Astrocyte of the cerebellum (primary cell): ENCODE measurements at regions of chr14 and their contacts with region 1.

Region 1: GRCh38 chr14:89040460-89041259 is 216.2 kb downstream of the TTC8 start:
- DNase-seq: peak; percentile 83
- H3K4me3 ChIP-seq: peak overlapping the region; percentile 30
- CTCF ChIP-seq: peak; percentile 98

Region 2: DNA sequence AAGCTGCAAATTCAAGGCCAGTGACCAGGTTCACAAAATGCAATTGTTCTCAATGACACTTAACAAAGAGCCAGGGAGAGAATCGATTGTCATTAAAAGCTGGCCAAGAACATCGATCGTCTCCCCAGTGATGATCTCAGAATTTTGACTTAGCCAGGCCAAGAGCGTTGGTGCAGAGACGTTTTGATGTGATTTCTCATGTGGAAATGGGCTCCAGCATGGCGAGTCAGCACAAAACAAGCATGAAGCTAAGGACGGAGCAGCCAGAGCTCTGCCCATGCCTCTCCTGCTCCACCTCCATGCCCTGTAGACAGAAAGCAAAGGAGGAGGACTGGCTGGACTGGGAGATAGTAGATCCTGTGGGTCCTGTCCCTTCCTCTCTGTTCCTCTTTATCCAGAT is 105.6 kb after region 1 on chr14:
- in situ Hi-C with region 1: loop called (anchors 5 kb)
- DNase-seq: no peak
- H3K4me3 ChIP-seq: no peak overlapping the region
- CTCF ChIP-seq: no peak

Region 3: GRCh38 chr14:89175881-89176799 is 135.5 kb after region 1 on chr14:
- in situ Hi-C with region 1: no loop called
- DNase-seq: no peak
- H3K4me3 ChIP-seq: no peak overlapping the region
- CTCF ChIP-seq: no peak

Region 4: GRCh38 chr14:89915114-89915878 is 874.6 kb after region 1 on chr14:
- in situ Hi-C with region 1: loop called (anchors 25 kb)
- DNase-seq: peak; percentile 70
- H3K4me3 ChIP-seq: no peak overlapping the region
- CTCF ChIP-seq: peak; percentile 94